ENCODE measurements at regions of chr11 and their contacts with region 1.

Region 1: DNA sequence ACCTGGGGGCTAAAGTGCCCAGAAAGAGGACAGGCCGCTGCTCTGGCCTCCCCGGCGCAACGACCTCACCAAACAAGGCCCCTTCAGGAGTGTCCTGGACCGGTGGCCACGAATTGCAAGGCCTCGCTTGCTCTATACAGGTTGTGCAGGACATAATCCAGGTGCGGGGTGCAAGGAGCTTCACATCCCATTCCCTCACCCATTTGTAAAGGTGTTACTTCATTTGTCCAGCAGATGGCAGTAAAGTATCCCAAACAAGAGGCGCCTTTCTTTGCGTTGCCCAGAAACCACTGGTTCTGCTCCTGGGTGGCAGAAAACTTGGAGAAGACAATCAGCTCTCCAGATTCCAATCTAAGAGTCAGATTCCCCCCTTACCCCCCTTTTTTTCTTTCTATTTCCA is 35.9 kb upstream of the PRDM11 start:
- DNase-seq: no peak
- ATAC-seq: peak; percentile 78

Region 2: DNA sequence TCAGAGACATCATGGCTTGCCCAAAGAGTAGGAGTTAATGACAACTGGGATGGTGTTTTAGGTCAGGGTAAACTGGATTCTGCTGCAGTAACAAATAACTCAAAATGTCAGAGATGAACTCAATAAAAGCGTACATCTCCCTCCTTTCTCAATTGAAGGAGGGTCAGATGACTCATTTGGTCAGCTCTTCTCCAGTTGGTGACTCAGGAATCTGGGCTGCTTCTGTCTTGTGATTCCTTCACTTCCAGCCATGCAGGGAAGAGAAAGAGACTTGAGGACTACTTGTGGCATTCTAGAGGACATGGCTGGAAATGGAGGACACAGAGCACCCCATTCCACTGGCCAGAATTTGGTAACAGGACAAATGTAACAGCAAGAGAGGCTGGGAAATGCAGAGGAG is 178.8 kb after region 1 on chr11:
- intact Hi-C with region 1: loop called (anchors 2 kb)
- DNase-seq: no peak
- ATAC-seq: no peak

Region 3: GRCh38 chr11:45332276-45332934 is 221.8 kb after region 1 on chr11:
- intact Hi-C with region 1: loop called (anchors 5 kb)
- DNase-seq: no peak
- ATAC-seq: peak; percentile 77